ENCODE measurements at regions of chr3 and their contacts with region 1.

Region 1: GRCh38 chr3:13346481-13347389 is 73.4 kb downstream of the NUP210 start:
- DNase-seq: peak; percentile 93
- H3K4me3 Mint-ChIP-seq: no peak overlapping the region
- H3K27ac Mint-ChIP-seq: peak overlapping the region; percentile 81
- H3K4me1 Mint-ChIP-seq: peaks cover 56% of the 10 kb centered on the region
- H3K27me3 Mint-ChIP-seq: no peaks in the 10 kb centered on the region

Region 2: DNA sequence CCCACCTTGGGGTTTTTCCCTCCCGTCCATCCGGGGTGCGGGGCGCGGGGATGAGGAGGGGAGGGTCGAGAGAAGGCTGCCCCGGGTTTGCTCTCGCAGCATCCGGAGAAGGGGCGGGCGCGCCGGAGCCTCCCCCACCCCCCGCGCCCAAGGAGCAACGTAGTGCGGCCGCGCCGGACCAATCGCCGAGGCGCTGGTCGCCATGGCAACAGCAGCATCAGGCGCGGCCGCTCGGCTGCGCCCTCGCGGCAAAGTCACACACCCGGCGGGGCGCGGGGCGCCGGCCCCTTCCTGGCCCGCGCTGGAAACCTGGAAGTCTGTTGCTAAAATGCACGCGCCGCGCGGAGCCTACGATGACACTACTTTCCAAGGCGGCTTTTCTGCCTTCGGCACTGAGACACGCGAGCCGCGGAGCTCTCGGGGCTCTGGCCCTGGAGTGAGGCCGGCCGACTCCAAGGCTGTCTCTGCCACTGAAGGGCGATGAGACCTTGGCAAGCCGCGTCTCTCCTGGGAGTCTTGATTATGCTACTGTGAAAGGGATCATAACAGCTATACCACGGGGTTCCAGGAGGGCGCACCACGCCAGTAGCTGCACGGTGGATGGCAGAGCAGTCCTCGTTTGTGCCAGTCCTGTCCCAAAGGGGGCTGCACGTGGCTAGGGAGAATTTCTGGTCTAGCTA is 273.3 kb before region 1 on chr3 and contains the start of gene IQSEC1:
- CTCF ChIA-PET with region 1: no interaction called
- intact Hi-C with region 1: no loop called
- DNase-seq: peak; percentile 73
- H3K4me3 Mint-ChIP-seq: peak within 1 kb of the TSS; percentile 72
- H3K27ac Mint-ChIP-seq: no peak within 1 kb of the TSS
- H3K4me1 Mint-ChIP-seq: peaks cover 21% of the 10 kb centered on the region
- H3K27me3 Mint-ChIP-seq: peaks cover 16% of the 10 kb centered on the region
- total RNA-seq, gene IQSEC1: 38.6 to 39.3 TPM

Region 3: DNA sequence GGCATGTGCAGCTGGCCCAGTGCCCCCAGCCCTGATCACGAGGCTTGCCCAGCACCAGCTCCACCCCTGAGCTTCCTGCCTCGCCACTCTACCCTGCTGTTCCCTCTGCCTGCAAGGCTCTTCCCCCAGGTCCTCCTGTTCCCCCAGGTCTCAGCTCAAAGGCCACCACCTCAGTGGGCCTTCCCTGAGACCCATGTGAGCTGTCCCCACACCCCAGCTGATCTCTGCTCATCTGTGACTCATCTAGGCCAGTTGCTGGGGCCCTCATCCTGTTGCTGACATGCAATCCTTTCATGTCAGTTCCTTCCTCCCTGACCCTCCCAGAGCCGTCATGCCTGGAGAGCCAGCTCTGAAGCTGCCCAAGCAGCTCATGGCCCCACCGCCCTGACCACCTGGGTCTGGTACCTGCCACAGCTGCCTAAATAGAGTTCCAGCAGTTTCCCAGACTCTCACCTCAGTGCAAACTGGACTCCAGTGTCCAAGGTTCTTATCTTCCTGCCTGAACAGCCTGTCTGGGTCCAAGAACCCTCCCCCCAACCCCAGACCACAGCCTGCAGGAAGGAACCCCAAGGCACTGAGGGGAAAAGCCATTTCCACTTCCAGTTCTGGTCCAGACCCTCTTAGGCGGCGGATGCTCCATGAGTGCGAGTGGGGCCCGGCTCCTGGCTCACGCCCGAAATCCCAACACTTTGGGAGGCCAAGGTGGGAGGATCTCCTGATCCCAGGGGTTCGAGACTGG is 156.9 kb before region 1 on chr3:
- CTCF ChIA-PET with region 1: no interaction called
- intact Hi-C with region 1: no loop called
- DNase-seq: peak; percentile 49
- H3K4me3 Mint-ChIP-seq: no peak overlapping the region
- H3K27ac Mint-ChIP-seq: no peak overlapping the region
- H3K4me1 Mint-ChIP-seq: peaks cover 6% of the 10 kb centered on the region
- H3K27me3 Mint-ChIP-seq: peaks cover 3% of the 10 kb centered on the region

Region 4: DNA sequence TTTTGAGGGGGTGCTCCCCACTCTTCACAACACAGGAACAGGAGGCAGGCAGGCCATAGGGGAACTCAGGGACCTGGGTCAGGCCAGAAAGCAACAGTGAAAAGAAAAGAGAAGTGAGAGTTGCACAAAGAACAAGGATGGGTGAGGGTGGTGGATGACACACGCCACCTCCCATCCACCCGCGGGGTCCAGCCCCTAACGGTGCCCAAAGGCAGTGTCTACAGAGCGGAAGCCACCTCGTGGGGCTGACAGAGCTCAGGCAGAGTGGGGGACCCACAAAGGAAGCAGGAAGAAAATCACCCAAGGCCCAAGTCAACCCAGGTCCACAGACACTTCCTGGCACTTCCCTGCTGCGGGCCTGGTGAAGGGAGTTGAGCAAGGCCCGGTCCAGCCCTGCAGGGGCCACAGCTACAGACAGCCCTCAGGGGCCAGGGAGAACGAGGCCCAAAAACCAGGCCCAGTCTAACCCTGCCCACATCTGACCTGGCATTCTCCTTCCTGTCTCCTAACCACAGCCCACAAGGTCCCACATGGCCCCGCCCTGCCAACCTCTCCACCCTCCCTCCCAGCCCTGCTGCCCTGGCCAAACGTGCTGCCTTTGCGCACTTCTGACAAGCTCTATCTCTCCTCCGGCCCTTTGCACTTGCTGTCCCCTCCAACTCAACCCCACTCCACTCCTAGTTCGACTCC is 67.5 kb after region 1 on chr3:
- CTCF ChIA-PET with region 1: interaction called, 7 read pairs
- intact Hi-C with region 1: loop called (anchors 1 kb)
- DNase-seq: peak; percentile 78
- H3K4me3 Mint-ChIP-seq: peak overlapping the region; percentile 63
- H3K27ac Mint-ChIP-seq: peak overlapping the region; percentile 93
- H3K4me1 Mint-ChIP-seq: peaks cover 61% of the 10 kb centered on the region
- H3K27me3 Mint-ChIP-seq: no peaks in the 10 kb centered on the region

Region 5: DNA sequence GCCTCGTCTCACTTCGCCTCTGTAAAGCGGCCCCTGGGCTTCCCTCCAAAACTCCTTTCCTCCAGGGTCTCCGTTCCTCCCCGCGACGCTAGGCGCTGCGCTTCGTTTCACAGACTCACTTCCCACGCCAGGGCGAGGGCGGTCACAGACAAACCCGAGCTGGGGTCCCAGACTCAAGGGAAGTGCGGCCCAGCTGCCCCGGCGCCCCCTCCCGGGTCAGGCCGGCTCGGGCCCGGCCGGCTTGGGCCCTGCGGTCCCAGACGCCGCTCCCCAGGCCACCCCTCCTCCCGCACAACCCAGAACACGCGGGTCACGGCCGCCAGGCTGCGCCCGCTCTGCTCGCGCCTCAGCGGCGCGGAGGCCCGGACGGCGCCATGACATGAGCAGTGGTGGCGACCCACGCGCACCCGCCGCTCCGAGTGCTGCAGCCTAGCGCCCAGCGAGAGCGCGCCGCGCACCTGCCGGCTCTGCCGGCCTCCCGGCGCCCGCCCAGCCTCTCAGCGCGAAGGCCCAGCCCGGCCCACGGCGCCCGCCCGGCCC is 72.8 kb after region 1 on chr3:
- CTCF ChIA-PET with region 1: interaction called, 7 read pairs
- intact Hi-C with region 1: loop called (anchors 1 kb)
- DNase-seq: peak; percentile 52
- H3K4me3 Mint-ChIP-seq: peak overlapping the region; percentile 92
- H3K27ac Mint-ChIP-seq: peak overlapping the region; percentile 93
- H3K4me1 Mint-ChIP-seq: peaks cover 70% of the 10 kb centered on the region
- H3K27me3 Mint-ChIP-seq: no peaks in the 10 kb centered on the region

Region 6: GRCh38 chr3:13543251-13543650 is 196.5 kb after region 1 on chr3:
- CTCF ChIA-PET with region 1: no interaction called
- intact Hi-C with region 1: no loop called
- DNase-seq: no peak
- H3K4me3 Mint-ChIP-seq: no peak overlapping the region
- H3K27ac Mint-ChIP-seq: no peak overlapping the region
- H3K4me1 Mint-ChIP-seq: peaks cover 19% of the 10 kb centered on the region
- H3K27me3 Mint-ChIP-seq: peaks cover 19% of the 10 kb centered on the region